Heart left ventricle (tissue), 16 donors: ENCODE measurements at regions of chr6 and their contacts with region 1.

Region 1: GRCh38 chr6:166556871-166557322 is 29.6 kb downstream of the RAMACL start:
- DNase-seq: peak; percentile 90 to 96 (median 90)
- ATAC-seq: peak; percentile 96 to 97 (median 96)
- H3K4me3 ChIP-seq: peak overlapping the region in 6 of 12 donors; percentile 0 to 27 (median 16)
- H3K27ac ChIP-seq: peak overlapping the region; percentile 33 to 83 (median 76)
- H3K4me1 ChIP-seq: peaks cover 0 to 63% (median 42%) of the 10 kb centered on the region in 12 donors
- H3K27me3 ChIP-seq: no peaks in the 10 kb centered on the region
- CTCF ChIP-seq: peak in 3 of 12 donors; percentile 15 to 23 (median 22)
- POLR2A ChIP-seq: peak in 1 of 2 donors; percentile 46

Region 2: GRCh38 chr6:166614589-166614988 is 57.7 kb after region 1 on chr6:
- intact Hi-C with region 1: loop called in 2 of 10 experiments (anchors 1 to 5 kb)
- DNase-seq: no peak
- ATAC-seq: peak; percentile 7 to 28 (median 16)
- H3K4me3 ChIP-seq: no peak overlapping the region
- H3K27ac ChIP-seq: peak overlapping the region; percentile 19 to 82 (median 66)
- H3K4me1 ChIP-seq: peaks cover 14 to 61% (median 36%) of the 10 kb centered on the region in 12 donors
- H3K27me3 ChIP-seq: no peaks in the 10 kb centered on the region
- CTCF ChIP-seq: no peak
- POLR2A ChIP-seq: no peak

Region 3: DNA sequence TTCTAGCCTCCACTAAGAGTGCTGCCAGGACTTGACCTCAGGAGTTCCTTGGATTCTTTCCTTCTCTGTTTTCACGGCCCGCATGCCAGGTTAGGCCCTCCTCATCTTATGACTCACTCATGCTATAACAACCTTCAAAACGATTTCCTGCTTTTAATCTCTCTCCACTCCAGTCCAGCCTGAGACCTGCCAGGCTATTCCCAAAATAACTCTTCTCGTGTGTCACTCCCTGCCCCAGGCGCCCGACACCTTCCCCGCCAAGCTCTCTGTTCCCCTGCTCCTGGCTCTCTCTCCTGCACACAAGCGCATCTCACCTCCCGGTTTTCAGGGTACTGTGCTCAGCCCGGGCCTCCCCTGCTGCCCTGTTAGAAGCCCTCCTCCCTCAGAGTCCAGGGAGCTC is 134.3 kb after region 1 on chr6:
- intact Hi-C with region 1: loop called in 2 of 10 experiments (anchors 5 kb)
- DNase-seq: peak in 4 of 5 donors; percentile 66 to 82 (median 74)
- ATAC-seq: peak; percentile 95 to 97 (median 96)
- H3K4me3 ChIP-seq: no peak overlapping the region
- H3K27ac ChIP-seq: peak overlapping the region in 10 of 12 donors; percentile 27 to 87 (median 69)
- H3K4me1 ChIP-seq: peaks cover 0 to 22% (median 11%) of the 10 kb centered on the region in 12 donors
- H3K27me3 ChIP-seq: no peaks in the 10 kb centered on the region
- CTCF ChIP-seq: no peak
- POLR2A ChIP-seq: no peak